GM12878 (cell line): ENCODE measurements at regions of chr14 and their contacts with region 1.

Region 1: DNA sequence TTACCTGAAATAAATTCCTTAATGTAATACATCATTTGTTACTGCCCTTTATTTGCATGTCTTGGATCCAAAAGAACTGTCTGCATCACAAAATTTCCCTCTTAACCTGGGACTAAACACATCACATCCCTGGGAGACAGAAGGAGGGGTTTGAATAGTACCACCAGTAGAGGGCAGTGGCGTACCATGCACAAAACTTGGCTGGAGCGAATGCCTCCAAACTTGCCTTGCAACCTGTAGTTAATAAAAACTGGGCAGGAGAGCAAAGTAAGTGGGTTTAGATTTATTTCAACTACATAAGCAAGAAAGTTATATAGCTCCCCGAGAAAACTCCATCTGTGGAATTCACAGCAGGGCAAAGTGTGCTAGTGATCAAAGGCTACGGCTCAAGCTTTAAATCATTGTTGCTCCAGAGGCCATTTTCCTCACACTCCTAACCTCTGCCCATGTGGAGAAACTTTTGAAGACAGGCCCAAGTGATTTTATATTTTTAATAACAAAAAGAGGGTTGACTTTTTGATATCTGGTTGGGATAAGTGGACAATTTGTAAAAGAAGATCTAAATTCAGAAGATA is 1176.7 kb upstream of the SEL1L start:
- DNase-seq: peak; percentile 8
- ATAC-seq: peak; percentile 87
- H3K4me3 ChIP-seq: no peak overlapping the region
- H3K27ac ChIP-seq: no peak overlapping the region
- H3K4me1 ChIP-seq: no peaks in the 10 kb centered on the region
- H3K27me3 ChIP-seq: no peaks in the 10 kb centered on the region
- CTCF ChIP-seq: peak; percentile 77 to 89 (median 81)
- EP300 ChIP-seq: no peak
- POLR2A ChIP-seq: no peak
- RAD21 ChIP-seq: peak; percentile 70

Region 2: GRCh38 chr14:82872494-82872893 is 162.1 kb after region 1 on chr14:
- CTCF ChIA-PET with region 1: interaction called, 4 read pairs
- POLR2A ChIA-PET with region 1: no interaction called
- RAD21 ChIA-PET with region 1: no interaction called
- SMC1A ChIA-PET with region 1: no interaction called
- in situ Hi-C with region 1: no loop called
- intact Hi-C with region 1: loop called (anchors 2 kb)
- DNase-seq: no peak
- ATAC-seq: peak; percentile 50; the same call in 2 of the 3 replicates
- H3K4me3 ChIP-seq: no peak overlapping the region
- H3K27ac ChIP-seq: no peak overlapping the region
- H3K4me1 ChIP-seq: no peaks in the 10 kb centered on the region
- H3K27me3 ChIP-seq: no peaks in the 10 kb centered on the region
- CTCF ChIP-seq: peak in 2 of 3 experiments; percentile 19 to 41; a peak in 3 of 6 replicates
- EP300 ChIP-seq: no peak
- POLR2A ChIP-seq: no peak
- RAD21 ChIP-seq: no peak

Region 3: GRCh38 chr14:83071888-83072501 is 361.6 kb after region 1 on chr14:
- CTCF ChIA-PET with region 1: interaction called, 6 read pairs
- POLR2A ChIA-PET with region 1: no interaction called
- RAD21 ChIA-PET with region 1: interaction called, 4 read pairs
- SMC1A ChIA-PET with region 1: interaction called, 5 read pairs
- in situ Hi-C with region 1: no loop called
- intact Hi-C with region 1: loop called (anchors 1 kb)
- DNase-seq: peak; percentile 11
- ATAC-seq: peak; percentile 82
- H3K4me3 ChIP-seq: no peak overlapping the region
- H3K27ac ChIP-seq: no peak overlapping the region
- H3K4me1 ChIP-seq: no peaks in the 10 kb centered on the region
- H3K27me3 ChIP-seq: no peaks in the 10 kb centered on the region
- CTCF ChIP-seq: peak; percentile 38 to 54 (median 47); a peak in 4 of 6 replicates
- EP300 ChIP-seq: no peak
- POLR2A ChIP-seq: no peak
- RAD21 ChIP-seq: peak; percentile 46

Region 4: GRCh38 chr14:83085725-83086124 is 375.4 kb after region 1 on chr14:
- CTCF ChIA-PET with region 1: no interaction called
- POLR2A ChIA-PET with region 1: no interaction called
- RAD21 ChIA-PET with region 1: no interaction called
- SMC1A ChIA-PET with region 1: no interaction called
- in situ Hi-C with region 1: no loop called
- intact Hi-C with region 1: no loop called
- DNase-seq: no peak
- ATAC-seq: peak; percentile 70
- H3K4me3 ChIP-seq: no peak overlapping the region
- H3K27ac ChIP-seq: no peak overlapping the region
- H3K4me1 ChIP-seq: no peaks in the 10 kb centered on the region
- H3K27me3 ChIP-seq: no peaks in the 10 kb centered on the region
- CTCF ChIP-seq: no peak
- EP300 ChIP-seq: no peak
- POLR2A ChIP-seq: no peak
- RAD21 ChIP-seq: no peak

Region 5: DNA sequence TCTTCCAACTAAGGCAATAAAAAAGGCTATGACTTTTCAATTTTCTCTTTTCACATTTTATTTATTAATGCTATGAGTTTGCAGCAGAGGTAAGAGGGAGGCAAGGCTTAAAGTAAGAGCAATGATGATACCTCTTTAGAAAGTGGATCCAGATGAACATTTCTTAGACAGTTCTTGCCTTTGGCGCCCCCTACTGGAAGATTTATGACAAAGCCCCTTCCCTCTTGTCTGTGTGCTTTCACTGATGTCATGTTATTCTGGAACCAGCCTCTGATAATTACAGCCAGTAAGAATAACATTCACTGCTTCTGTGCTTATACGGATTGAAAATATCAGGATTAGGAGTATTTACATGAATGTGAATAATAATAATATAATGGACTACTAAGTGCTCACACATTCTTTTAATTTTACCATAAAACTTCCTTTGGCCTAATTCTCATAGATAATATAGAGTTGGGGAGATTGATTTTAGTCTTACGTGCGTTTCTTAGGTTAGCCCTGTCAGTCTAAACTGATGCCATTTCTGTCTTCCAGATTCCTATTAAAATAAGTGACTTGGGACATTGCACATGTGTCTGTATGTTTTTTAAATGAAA is 753.2 kb after region 1 on chr14:
- CTCF ChIA-PET with region 1: no interaction called
- POLR2A ChIA-PET with region 1: no interaction called
- RAD21 ChIA-PET with region 1: no interaction called
- SMC1A ChIA-PET with region 1: no interaction called
- in situ Hi-C with region 1: no loop called
- intact Hi-C with region 1: loop called (anchors 5 kb)
- DNase-seq: no peak
- ATAC-seq: peak; percentile 89
- H3K4me3 ChIP-seq: no peak overlapping the region
- H3K27ac ChIP-seq: no peak overlapping the region
- H3K4me1 ChIP-seq: no peaks in the 10 kb centered on the region
- H3K27me3 ChIP-seq: no peaks in the 10 kb centered on the region
- CTCF ChIP-seq: peak; percentile 45 to 62 (median 53)
- EP300 ChIP-seq: no peak
- POLR2A ChIP-seq: no peak
- RAD21 ChIP-seq: peak; percentile 53